Activated naive CD8-positive, alpha-beta T cell treated with anti-CD3 and anti-CD28 coated beads, Interleukin-2, amount 10 ng/mL, durations not matched to agents 7 days and 5 days (primary cell): ENCODE measurements at regions of chr5 and their contacts with region 1.

Region 1: GRCh38 chr5:173057062-173057924 is 1.1 kb downstream of the CREBRF start:
- DNase-seq: peak; percentile 98
- ATAC-seq: peak; percentile 86
- H3K4me3 Mint-ChIP-seq: peak overlapping the region; percentile 96
- H3K27ac Mint-ChIP-seq: peak overlapping the region; percentile 97
- H3K4me1 Mint-ChIP-seq: peaks cover 40% of the 10 kb centered on the region
- H3K27me3 Mint-ChIP-seq: no peaks in the 10 kb centered on the region

Region 2: DNA sequence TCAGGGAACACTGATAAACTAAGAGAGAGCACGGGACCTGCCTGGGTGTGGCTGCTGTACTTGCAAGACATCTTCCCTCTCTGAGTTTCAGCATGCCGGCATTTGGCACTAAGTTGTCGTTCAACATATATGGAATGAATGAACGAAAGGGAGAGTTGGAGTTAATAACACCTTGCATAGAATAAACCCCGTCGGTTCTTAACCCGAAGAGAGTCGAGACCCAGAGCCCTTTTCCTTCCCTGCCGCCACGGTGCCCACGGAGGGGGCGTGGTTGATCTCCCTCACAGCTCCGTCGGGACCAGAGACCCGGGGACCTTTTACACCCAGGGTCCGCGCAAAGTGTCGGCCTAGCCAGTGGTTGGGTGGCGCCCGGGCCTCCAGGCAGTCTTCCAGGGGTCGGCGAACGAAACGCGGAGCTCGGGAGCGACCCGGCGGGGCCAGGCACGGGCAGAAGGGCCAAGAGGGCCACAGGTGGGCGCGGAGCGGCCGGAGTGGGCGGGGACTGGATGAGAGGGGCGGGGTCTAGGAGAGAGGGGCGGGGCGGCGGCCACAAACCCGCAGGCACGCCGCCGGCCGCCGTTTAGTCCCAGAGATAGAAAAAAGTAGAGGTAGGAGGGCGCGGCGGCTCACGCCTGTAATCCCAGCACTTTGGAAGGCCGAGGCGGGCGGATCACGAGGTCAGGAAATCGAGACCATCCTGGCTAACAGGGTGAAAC is 98.8 kb before region 1 on chr5:
- POLR2A ChIA-PET with region 1: interaction called, 11 read pairs
- DNase-seq: peak; percentile 75
- ATAC-seq: peak; percentile 55
- H3K4me3 Mint-ChIP-seq: peak overlapping the region; percentile 93
- H3K27ac Mint-ChIP-seq: peak overlapping the region; percentile 97
- H3K4me1 Mint-ChIP-seq: peaks cover 24% of the 10 kb centered on the region
- H3K27me3 Mint-ChIP-seq: no peaks in the 10 kb centered on the region

Region 3: GRCh38 chr5:173035904-173036707 is 21.2 kb before region 1 on chr5:
- POLR2A ChIA-PET with region 1: interaction called, 16 read pairs
- DNase-seq: no peak
- ATAC-seq: no peak
- H3K4me3 Mint-ChIP-seq: peak overlapping the region; percentile 77
- H3K27ac Mint-ChIP-seq: peak overlapping the region; percentile 93
- H3K4me1 Mint-ChIP-seq: peaks cover 27% of the 10 kb centered on the region
- H3K27me3 Mint-ChIP-seq: no peaks in the 10 kb centered on the region